ENCODE measurements at regions of chr7 and their contacts with region 1.

Region 1: GRCh38 chr7:29921404-29922010 is 68.1 kb downstream of the SCRN1 start:
- DNase-seq: peak; percentile 69
- ATAC-seq: peak; percentile 83
- H3K4me3 ChIP-seq: no peak overlapping the region
- H3K4me3 Mint-ChIP-seq: no peak overlapping the region
- H3K27ac ChIP-seq: no peak overlapping the region
- H3K27ac Mint-ChIP-seq: no peak overlapping the region
- H3K4me1 ChIP-seq: no peaks in the 10 kb centered on the region
- H3K4me1 Mint-ChIP-seq: no peaks in the 10 kb centered on the region
- H3K27me3 ChIP-seq: no peaks in the 10 kb centered on the region
- H3K27me3 Mint-ChIP-seq: no peaks in the 10 kb centered on the region
- CTCF ChIP-seq: peak; percentile 94

Region 2: DNA sequence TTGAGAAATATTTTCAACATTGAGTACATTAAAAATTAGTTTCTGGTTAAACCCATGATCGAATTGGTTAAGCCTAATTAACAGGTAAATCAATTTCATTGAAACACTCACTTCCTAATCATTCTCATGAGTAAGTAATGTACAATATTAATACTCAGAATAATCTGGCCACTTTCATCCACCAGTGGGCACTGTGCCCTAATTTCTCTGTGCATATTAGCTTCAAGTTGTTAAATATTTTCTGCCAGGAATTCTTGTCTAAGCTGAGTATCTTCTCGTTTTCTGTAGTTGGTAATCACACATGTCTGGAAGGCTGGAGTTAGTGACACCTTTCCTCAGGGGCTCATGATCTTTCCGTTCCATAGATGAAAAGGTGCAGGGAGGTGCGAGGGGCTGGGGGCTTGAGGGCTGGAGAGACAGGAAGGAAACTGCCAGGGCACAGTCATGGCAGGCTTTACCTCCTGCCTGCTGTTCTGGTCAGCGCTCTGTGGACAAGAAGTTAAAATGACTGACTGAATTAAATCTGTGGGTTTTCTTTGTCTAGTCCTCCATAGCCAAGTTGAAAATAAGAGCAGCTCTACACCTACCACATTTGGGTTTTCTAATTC is 43.3 kb before region 1 on chr7:
- CTCF ChIA-PET with region 1: interaction called, 25 read pairs
- POLR2A ChIA-PET with region 1: no interaction called
- intact Hi-C with region 1: no loop called
- DNase-seq: peak; percentile 59
- ATAC-seq: no peak
- H3K4me3 ChIP-seq: no peak overlapping the region
- H3K4me3 Mint-ChIP-seq: no peak overlapping the region
- H3K27ac ChIP-seq: no peak overlapping the region
- H3K27ac Mint-ChIP-seq: no peak overlapping the region
- H3K4me1 ChIP-seq: peaks cover 0 to under 1% of the 10 kb centered on the region in 2 donors
- H3K4me1 Mint-ChIP-seq: peaks cover 3% of the 10 kb centered on the region
- H3K27me3 ChIP-seq: peaks cover 0 to 3% (median 1%) of the 10 kb centered on the region in 4 experiments
- H3K27me3 Mint-ChIP-seq: peaks cover 25% of the 10 kb centered on the region
- CTCF ChIP-seq: peak; percentile 77

Region 3: DNA sequence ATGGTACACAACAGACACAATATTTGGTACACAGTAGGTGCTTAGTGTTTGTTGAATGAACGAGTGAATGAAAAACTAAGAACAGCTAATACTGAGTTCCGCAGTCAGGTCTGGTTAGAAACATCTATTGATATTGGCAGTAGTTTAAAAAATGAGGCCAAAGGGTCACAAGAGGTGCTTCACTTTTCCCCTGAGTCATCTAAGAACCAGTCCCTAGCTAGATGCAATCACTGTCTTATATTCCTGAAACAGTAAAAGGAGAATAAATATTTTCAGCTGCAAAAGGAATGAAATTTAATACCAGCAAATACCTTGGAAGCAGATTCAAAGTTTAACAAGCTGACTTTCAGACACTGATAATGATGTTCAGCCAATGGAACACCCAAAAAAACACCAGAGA is 13.6 kb after region 1 on chr7:
- CTCF ChIA-PET with region 1: interaction called, 13 read pairs
- POLR2A ChIA-PET with region 1: no interaction called
- intact Hi-C with region 1: no loop called
- DNase-seq: no peak
- ATAC-seq: no peak
- H3K4me3 ChIP-seq: no peak overlapping the region
- H3K4me3 Mint-ChIP-seq: no peak overlapping the region
- H3K27ac ChIP-seq: no peak overlapping the region
- H3K27ac Mint-ChIP-seq: no peak overlapping the region
- H3K4me1 ChIP-seq: no peaks in the 10 kb centered on the region
- H3K4me1 Mint-ChIP-seq: no peaks in the 10 kb centered on the region
- H3K27me3 ChIP-seq: no peaks in the 10 kb centered on the region
- H3K27me3 Mint-ChIP-seq: no peaks in the 10 kb centered on the region
- CTCF ChIP-seq: no peak

Region 4: GRCh38 chr7:30074422-30075030 is 153.0 kb after region 1 on chr7:
- CTCF ChIA-PET with region 1: interaction called, 13 read pairs
- POLR2A ChIA-PET with region 1: no interaction called
- intact Hi-C with region 1: no loop called
- DNase-seq: peak; percentile 34
- ATAC-seq: no peak
- H3K4me3 ChIP-seq: no peak overlapping the region
- H3K4me3 Mint-ChIP-seq: no peak overlapping the region
- H3K27ac ChIP-seq: no peak overlapping the region
- H3K27ac Mint-ChIP-seq: no peak overlapping the region
- H3K4me1 ChIP-seq: no peaks in the 10 kb centered on the region
- H3K4me1 Mint-ChIP-seq: no peaks in the 10 kb centered on the region
- H3K27me3 ChIP-seq: no peaks in the 10 kb centered on the region
- H3K27me3 Mint-ChIP-seq: no peaks in the 10 kb centered on the region
- CTCF ChIP-seq: peak; percentile 64